ENCODE measurements at regions of chr18 and their contacts with region 1.

Region 1: GRCh38 chr18:44765456-44765855 is 84.8 kb downstream of the SETBP1 start:
- DNase-seq: no peak
- H3K4me3 ChIP-seq: no peak overlapping the region
- H3K27ac ChIP-seq: peak overlapping the region in 1 of 2 donors; percentile 32
- H3K4me1 ChIP-seq: peaks cover 14% of the 10 kb centered on the region
- H3K27me3 ChIP-seq: no peaks in the 10 kb centered on the region
- CTCF ChIP-seq: no peak
- EP300 ChIP-seq: no peak
- POLR2A ChIP-seq: no peak

Region 2: DNA sequence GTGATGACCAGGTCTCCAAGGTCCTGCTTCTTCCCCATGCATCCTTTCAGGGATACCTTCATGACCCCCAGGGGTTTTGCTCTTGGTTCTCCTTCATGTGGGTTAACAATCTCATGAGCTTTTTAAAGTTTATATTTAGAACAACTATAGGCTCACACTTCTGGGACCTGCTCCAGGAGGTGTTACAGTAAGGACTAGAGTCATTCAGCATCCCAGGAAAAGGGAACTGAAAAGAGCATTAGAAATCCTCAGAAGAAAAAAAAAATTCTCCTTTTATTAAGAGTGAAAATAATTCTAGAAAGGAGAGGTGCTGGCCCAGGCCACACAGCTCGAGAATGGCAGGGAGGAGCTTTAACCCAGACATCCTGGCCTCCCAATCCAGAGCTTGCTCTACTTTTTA is 18.3 kb before region 1 on chr18:
- intact Hi-C with region 1: loop called in 1 of 4 experiments (anchors 2 kb)
- DNase-seq: no peak
- H3K4me3 ChIP-seq: no peak overlapping the region
- H3K27ac ChIP-seq: no peak overlapping the region
- H3K4me1 ChIP-seq: peaks cover 11% of the 10 kb centered on the region
- H3K27me3 ChIP-seq: no peaks in the 10 kb centered on the region
- CTCF ChIP-seq: no peak
- EP300 ChIP-seq: no peak
- POLR2A ChIP-seq: no peak

Region 3: GRCh38 chr18:44838971-44839666 is 73.7 kb after region 1 on chr18:
- intact Hi-C with region 1: no loop called
- DNase-seq: peak; percentile 56 to 67 (median 60)
- H3K4me3 ChIP-seq: no peak overlapping the region
- H3K27ac ChIP-seq: no peak overlapping the region
- H3K4me1 ChIP-seq: peaks cover 8% of the 10 kb centered on the region
- H3K27me3 ChIP-seq: no peaks in the 10 kb centered on the region
- CTCF ChIP-seq: no peak
- EP300 ChIP-seq: no peak
- POLR2A ChIP-seq: no peak

Region 4: GRCh38 chr18:45664824-45665763 is 899.6 kb after region 1 on chr18:
- intact Hi-C with region 1: no loop called
- DNase-seq: peak; percentile 24 to 66 (median 47)
- H3K4me3 ChIP-seq: no peak overlapping the region
- H3K27ac ChIP-seq: no peak overlapping the region
- H3K4me1 ChIP-seq: no peaks in the 10 kb centered on the region
- H3K27me3 ChIP-seq: no peaks in the 10 kb centered on the region
- CTCF ChIP-seq: peak; percentile 60 to 73 (median 70)
- EP300 ChIP-seq: no peak
- POLR2A ChIP-seq: no peak

Measured in ovary (tissue), 10 donors.